CD14-positive monocyte (primary cell): ENCODE measurements at regions of chr20 and their contacts with region 1.

Region 1: DNA sequence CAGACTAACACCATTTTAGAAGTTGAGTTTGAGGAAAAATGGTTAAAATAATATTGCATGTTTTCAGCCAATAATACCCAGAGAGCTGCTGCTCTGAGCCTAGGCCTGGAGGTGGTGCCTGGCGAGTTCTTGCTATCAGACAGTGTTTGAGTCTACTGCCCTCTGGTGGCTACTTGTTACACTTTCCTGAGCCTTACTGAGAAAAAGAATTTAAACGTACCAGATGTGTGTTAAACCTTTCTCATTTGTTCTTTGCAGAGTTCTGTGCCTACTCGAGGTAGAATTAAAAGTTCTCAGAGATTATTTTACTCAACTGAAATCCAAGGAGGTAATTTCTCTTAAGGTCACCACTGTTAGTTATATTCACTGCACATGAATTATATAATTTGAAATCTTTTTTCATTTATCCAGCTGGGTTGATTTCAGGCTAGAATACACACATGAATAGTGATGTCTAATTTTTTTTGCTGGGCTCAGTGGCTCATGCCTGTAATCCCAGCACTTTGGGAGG is 38.2 kb downstream of the SHLD1 start:
- DNase-seq: peak; percentile 80 to 91 (median 85)
- H3K4me3 ChIP-seq: no peak overlapping the region
- H3K4me3 Mint-ChIP-seq: no peak overlapping the region
- H3K27ac ChIP-seq: no peak overlapping the region
- H3K27ac Mint-ChIP-seq: peak overlapping the region in 3 of 7 donors; percentile 11 to 77 (median 37)
- H3K4me1 ChIP-seq: no peaks in the 10 kb centered on the region
- H3K4me1 Mint-ChIP-seq: no peaks in the 10 kb centered on the region
- H3K27me3 ChIP-seq: no peaks in the 10 kb centered on the region
- H3K27me3 Mint-ChIP-seq: no peaks in the 10 kb centered on the region
- CTCF ChIP-seq: peak; percentile 77

Region 2: GRCh38 chr20:6074145-6074561 is 285.7 kb after region 1 on chr20:
- intact Hi-C with region 1: loop called (anchors 10 kb)
- DNase-seq: no peak
- H3K4me3 ChIP-seq: no peak overlapping the region
- H3K4me3 Mint-ChIP-seq: no peak overlapping the region
- H3K27ac ChIP-seq: no peak overlapping the region
- H3K27ac Mint-ChIP-seq: no peak overlapping the region
- H3K4me1 ChIP-seq: no peaks in the 10 kb centered on the region
- H3K4me1 Mint-ChIP-seq: no peaks in the 10 kb centered on the region
- H3K27me3 ChIP-seq: no peaks in the 10 kb centered on the region
- H3K27me3 Mint-ChIP-seq: peaks cover 0 to 2% (median 0%) of the 10 kb centered on the region in 3 donors
- CTCF ChIP-seq: no peak